HepG2 (cell line): ENCODE measurements at regions of chr2 and their contacts with region 1.

Region 1: DNA sequence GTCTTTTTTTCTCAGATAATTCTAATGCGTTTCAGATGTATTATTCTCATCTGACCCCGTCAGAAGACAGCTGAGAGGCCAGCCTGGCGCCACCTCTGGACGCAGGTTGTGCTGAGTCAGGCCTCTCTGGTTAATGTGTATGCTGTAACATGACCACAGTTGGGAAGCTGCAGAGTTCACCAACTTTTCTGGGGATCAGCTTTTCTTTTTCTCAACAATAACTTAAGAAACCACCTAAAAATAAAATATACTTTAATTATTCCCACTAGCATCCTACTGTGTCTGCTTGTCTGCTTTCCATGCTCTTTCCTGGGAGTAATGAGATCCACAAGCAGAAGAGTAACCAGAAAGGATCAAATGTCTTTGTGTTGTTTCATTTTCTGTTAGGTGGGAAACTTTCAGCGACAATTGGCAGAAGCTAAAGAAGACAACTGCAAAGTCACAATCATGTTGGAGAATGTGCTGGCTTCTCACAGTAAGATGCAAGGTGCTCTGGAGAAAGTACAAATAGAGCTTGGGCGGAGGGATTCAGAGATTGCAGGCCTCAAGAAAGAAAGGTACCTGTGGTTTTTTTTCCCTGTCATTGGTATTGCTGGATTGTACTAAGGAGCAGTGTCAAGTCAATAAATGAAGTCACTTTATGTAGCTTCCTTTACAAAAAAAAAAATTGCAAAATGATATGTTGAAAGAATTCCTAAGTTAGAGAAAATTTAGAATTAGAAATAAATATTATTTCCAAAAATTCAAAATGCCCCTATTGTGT is 79.8 kb downstream of the CCDC150 start:
- DNase-seq: peak; percentile 79
- ATAC-seq: peak; percentile 100
- H3K4me3 ChIP-seq: peak overlapping the region; percentile 11 to 42 (median 16); a peak in 5 of 6 replicates
- H3K27ac ChIP-seq: peak overlapping the region; percentile 81
- H3K4me1 ChIP-seq: peaks cover 14% of the 10 kb centered on the region
- H3K27me3 ChIP-seq: no peaks in the 10 kb centered on the region
- CTCF ChIP-seq: peak; percentile 65
- EP300 ChIP-seq: peak in 1 of 2 experiments; percentile 28; a peak in 1 of 4 replicates
- POLR2A ChIP-seq: 0 out of 4 replicates have a peak, but pooled peaks of 1 of the 2 experiments have one; percentile 28
- RAD21 ChIP-seq: 0 out of 2 replicates have a peak, but pooled peaks have one; percentile 11

Region 2: GRCh38 chr2:196372811-196373664 is 346.3 kb before region 1 on chr2:
- CTCF ChIA-PET with region 1: no interaction called
- POLR2A ChIA-PET with region 1: no interaction called
- in situ Hi-C with region 1: no loop called
- intact Hi-C with region 1: no loop called
- DNase-seq: no peak
- ATAC-seq: no peak
- H3K4me3 ChIP-seq: no peak overlapping the region
- H3K27ac ChIP-seq: no peak overlapping the region
- H3K4me1 ChIP-seq: no peaks in the 10 kb centered on the region
- H3K27me3 ChIP-seq: no peaks in the 10 kb centered on the region
- CTCF ChIP-seq: no peak
- EP300 ChIP-seq: no peak
- POLR2A ChIP-seq: no peak
- RAD21 ChIP-seq: no peak

Region 3: GRCh38 chr2:196729418-196729817 is 10.1 kb after region 1 on chr2:
- CTCF ChIA-PET with region 1: no interaction called
- POLR2A ChIA-PET with region 1: interaction called, 10 read pairs
- in situ Hi-C with region 1: no loop called
- intact Hi-C with region 1: no loop called
- DNase-seq: peak; percentile 92
- ATAC-seq: peak; percentile 99
- H3K4me3 ChIP-seq: no peak overlapping the region; a peak in 1 of 6 replicates
- H3K27ac ChIP-seq: peak overlapping the region; percentile 76
- H3K4me1 ChIP-seq: peaks cover 21% of the 10 kb centered on the region
- H3K27me3 ChIP-seq: no peaks in the 10 kb centered on the region
- CTCF ChIP-seq: no peak
- EP300 ChIP-seq: peak in 1 of 2 experiments; percentile 59; a peak in 1 of 4 replicates
- POLR2A ChIP-seq: no peak
- RAD21 ChIP-seq: no peak